ENCODE measurements at regions of chr7 and their contacts with region 1.

Region 1: GRCh38 chr7:50739744-50740435 is 42.8 kb downstream of the GRB10 start:
- DNase-seq: peak; percentile 38 to 93 (median 91)
- ATAC-seq: peak; percentile 99
- H3K4me3 ChIP-seq: peak overlapping the region; percentile 40
- H3K4me3 Mint-ChIP-seq: peak overlapping the region; percentile 68 to 87 (median 78)
- H3K27ac ChIP-seq: peak overlapping the region; percentile 80
- H3K27ac Mint-ChIP-seq: peak overlapping the region; percentile 82 to 97 (median 96)
- H3K4me1 ChIP-seq: peaks cover 15 to 23% of the 10 kb centered on the region in 2 donors
- H3K4me1 Mint-ChIP-seq: peaks cover 12 to 46% (median 34%) of the 10 kb centered on the region in 7 donors
- H3K27me3 ChIP-seq: no peaks in the 10 kb centered on the region
- H3K27me3 Mint-ChIP-seq: peaks cover 0 to 2% (median 0%) of the 10 kb centered on the region in 5 donors

Region 2: DNA sequence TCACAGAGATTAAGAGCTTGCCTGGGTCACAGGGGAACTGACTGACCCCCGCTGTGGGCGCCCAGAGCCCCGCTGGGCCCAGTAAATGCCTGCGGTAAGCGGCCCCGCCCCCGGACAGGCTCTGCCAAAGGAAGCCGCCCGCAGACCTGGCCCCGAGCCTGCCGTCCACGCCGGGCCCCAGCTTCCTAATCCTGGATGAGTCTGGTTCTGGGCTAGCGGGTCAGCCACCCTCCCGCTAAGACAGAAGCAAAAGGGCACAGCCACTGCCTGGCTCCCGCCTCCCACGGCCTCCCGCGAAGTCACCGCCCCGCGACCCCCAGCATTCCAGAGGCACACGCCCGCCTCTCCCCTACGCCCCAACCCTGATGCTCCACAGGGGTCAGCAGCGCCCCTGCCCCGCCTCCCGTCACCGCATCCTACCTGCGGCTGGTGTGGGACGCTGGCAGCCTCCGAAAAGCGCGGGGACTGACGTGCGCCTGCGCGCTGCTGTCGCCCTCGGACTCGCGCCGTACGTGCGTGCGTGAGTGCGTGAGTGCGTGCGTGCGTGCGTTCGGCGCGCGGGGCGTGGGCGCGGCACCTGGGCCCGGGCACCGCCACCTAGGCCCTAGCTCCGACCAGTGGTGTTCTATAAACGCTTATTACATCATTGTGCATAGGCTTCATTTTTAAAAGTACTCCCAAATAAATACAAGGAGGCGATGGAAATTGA is 289.9 kb before region 1 on chr7 and contains the start of gene FIGNL1:
- CTCF ChIA-PET with region 1: no interaction called
- POLR2A ChIA-PET with region 1: interaction called, 4 read pairs
- intact Hi-C with region 1: loop called (anchors 2 to 5 kb)
- DNase-seq: peak; percentile 61 to 87 (median 84)
- ATAC-seq: peak; percentile 98
- H3K4me3 ChIP-seq: peak within 1 kb of the TSS; percentile 63
- H3K4me3 Mint-ChIP-seq: peak within 1 kb of the TSS; percentile 91 to 96 (median 94)
- H3K27ac ChIP-seq: peak within 1 kb of the TSS; percentile 94
- H3K27ac Mint-ChIP-seq: peak within 1 kb of the TSS; percentile 92 to 99 (median 96)
- H3K4me1 ChIP-seq: peaks cover 13 to 14% of the 10 kb centered on the region in 2 donors
- H3K4me1 Mint-ChIP-seq: peaks cover 14 to 43% (median 29%) of the 10 kb centered on the region in 7 donors
- H3K27me3 ChIP-seq: no peaks in the 10 kb centered on the region
- H3K27me3 Mint-ChIP-seq: peaks cover 0 to 11% (median 0%) of the 10 kb centered on the region in 5 donors
- total RNA-seq, gene FIGNL1: 7.7 to 30.2 (median 14.3) TPM

Region 3: DNA sequence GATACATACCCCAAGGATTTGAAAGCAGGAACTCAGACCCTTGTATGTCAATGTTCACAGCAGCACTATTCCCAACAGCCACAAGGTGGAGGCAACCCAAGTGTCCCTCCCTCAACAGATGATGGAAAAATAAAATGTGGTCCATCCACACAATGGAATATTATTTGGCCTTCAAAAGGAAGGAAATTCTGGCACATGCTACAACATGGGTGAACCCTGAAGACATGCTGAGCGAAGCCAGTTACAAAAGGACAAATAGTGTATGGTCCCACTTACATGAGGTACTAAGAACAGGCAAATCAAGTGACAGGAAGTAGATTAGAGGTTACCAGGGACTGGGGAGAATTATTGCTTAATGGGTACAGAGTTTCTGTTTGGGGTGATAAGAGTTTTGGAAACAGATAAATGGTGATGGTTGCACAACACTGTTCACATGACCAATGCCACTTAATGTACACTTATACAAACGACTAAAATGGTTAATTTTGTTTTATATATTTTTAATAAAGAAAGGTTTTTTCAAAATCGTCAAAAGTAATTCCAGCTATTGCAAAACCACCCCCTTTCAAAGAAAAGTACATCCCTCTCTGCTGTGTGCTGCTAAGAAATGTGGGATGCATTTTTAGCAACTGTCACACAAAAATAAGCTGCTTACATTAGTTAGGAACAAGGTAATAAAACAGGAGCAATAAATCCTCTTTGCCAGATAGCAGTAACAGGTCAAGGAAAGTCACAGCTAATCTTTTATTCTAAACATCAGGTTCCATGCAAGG is 42.9 kb before region 1 on chr7:
- CTCF ChIA-PET with region 1: no interaction called
- POLR2A ChIA-PET with region 1: no interaction called
- intact Hi-C with region 1: loop called (anchors 1 to 5 kb)
- DNase-seq: peak in 5 of 9 donors; percentile 27 to 43 (median 38)
- ATAC-seq: peak; percentile 63
- H3K4me3 ChIP-seq: no peak overlapping the region
- H3K4me3 Mint-ChIP-seq: peak overlapping the region in 1 of 10 donors; percentile 3
- H3K27ac ChIP-seq: no peak overlapping the region
- H3K27ac Mint-ChIP-seq: peak overlapping the region in 2 of 9 donors; percentile 16 to 19
- H3K4me1 ChIP-seq: no peaks in the 10 kb centered on the region
- H3K4me1 Mint-ChIP-seq: peaks cover 0 to 9% (median 5%) of the 10 kb centered on the region in 7 donors
- H3K27me3 ChIP-seq: no peaks in the 10 kb centered on the region
- H3K27me3 Mint-ChIP-seq: peaks cover 0 to 3% (median 0%) of the 10 kb centered on the region in 5 donors

Region 4: GRCh38 chr7:50724526-50725520 is 15.1 kb before region 1 on chr7:
- CTCF ChIA-PET with region 1: interaction called, 4 read pairs
- POLR2A ChIA-PET with region 1: interaction called, 6 read pairs
- intact Hi-C with region 1: loop called in 1 of 2 experiments (anchors 1 kb)
- DNase-seq: peak in 3 of 9 donors; percentile 7 to 25 (median 10)
- ATAC-seq: peak; percentile 51
- H3K4me3 ChIP-seq: no peak overlapping the region
- H3K4me3 Mint-ChIP-seq: peak overlapping the region in 6 of 10 donors; percentile 5 to 67 (median 38)
- H3K27ac ChIP-seq: no peak overlapping the region
- H3K27ac Mint-ChIP-seq: peak overlapping the region in 4 of 9 donors; percentile 11 to 72 (median 70)
- H3K4me1 ChIP-seq: peaks cover 0 to 3% of the 10 kb centered on the region in 2 donors
- H3K4me1 Mint-ChIP-seq: peaks cover 0 to 22% (median 13%) of the 10 kb centered on the region in 7 donors
- H3K27me3 ChIP-seq: no peaks in the 10 kb centered on the region
- H3K27me3 Mint-ChIP-seq: peaks cover 0 to 3% (median 0%) of the 10 kb centered on the region in 5 donors

Region 5: GRCh38 chr7:50768485-50769484 is 28.9 kb after region 1 on chr7:
- CTCF ChIA-PET with region 1: no interaction called
- POLR2A ChIA-PET with region 1: no interaction called
- intact Hi-C with region 1: no loop called
- DNase-seq: no peak
- ATAC-seq: no peak
- H3K4me3 ChIP-seq: no peak overlapping the region
- H3K4me3 Mint-ChIP-seq: no peak overlapping the region
- H3K27ac ChIP-seq: no peak overlapping the region
- H3K27ac Mint-ChIP-seq: peak overlapping the region in 1 of 9 donors; percentile 2
- H3K4me1 ChIP-seq: no peaks in the 10 kb centered on the region
- H3K4me1 Mint-ChIP-seq: peaks cover 0 to 19% (median 4%) of the 10 kb centered on the region in 7 donors
- H3K27me3 ChIP-seq: no peaks in the 10 kb centered on the region
- H3K27me3 Mint-ChIP-seq: no peaks in the 10 kb centered on the region

Region 6: DNA sequence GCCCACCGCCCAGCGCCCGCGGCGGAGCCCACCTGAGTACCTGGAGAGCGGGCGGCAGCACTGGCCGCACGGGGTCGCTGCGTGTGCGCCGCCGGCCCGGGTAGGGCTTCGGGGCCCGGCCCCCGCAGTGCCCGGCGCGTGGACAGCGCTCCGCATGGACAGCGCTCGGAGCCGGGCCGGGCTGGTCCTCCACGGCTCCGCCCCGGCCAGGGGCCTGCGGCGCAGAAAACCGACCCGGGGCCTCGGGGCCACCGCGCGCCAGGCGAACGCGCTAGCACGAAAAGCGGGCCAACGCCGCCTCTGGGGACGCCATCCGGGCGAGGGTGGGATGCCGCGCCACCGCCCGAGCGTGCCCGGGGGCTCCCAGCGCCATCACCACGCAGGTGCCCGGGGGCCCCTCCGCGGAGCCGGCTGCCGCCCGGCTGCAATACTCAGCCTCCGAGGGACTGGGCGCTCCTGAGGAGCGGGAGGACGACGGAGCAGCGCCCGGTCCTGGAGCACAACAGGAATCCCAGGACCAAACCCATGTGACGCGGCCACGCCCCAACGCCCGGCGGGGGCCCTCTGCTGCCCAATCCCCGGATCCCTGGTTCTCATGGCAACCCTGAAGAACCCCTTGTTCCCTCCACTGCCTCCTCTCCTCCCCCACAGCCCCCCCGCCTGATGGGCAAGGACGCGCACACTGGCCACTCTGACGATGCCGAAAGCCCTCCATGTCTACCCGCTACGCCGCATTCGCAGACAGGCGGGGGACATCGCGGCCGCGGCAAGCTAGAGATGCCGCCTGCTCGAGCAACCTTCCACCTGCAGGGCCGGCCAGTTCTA is 42.7 kb after region 1 on chr7 and contains the start of gene GRB10:
- CTCF ChIA-PET with region 1: no interaction called
- POLR2A ChIA-PET with region 1: no interaction called
- intact Hi-C with region 1: loop called (anchors 1 to 2 kb)
- DNase-seq: peak in 3 of 9 donors; percentile 13 to 18 (median 16)
- ATAC-seq: peak; percentile 61
- H3K4me3 ChIP-seq: peak within 1 kb of the TSS; percentile 48
- H3K4me3 Mint-ChIP-seq: peak within 1 kb of the TSS; percentile 65 to 89 (median 84)
- H3K27ac ChIP-seq: no peak within 1 kb of the TSS
- H3K27ac Mint-ChIP-seq: peak within 1 kb of the TSS in 8 of 9 donors; percentile 67 to 95 (median 82)
- H3K4me1 ChIP-seq: peaks cover 0 to 9% of the 10 kb centered on the region in 2 donors
- H3K4me1 Mint-ChIP-seq: peaks cover 6 to 41% (median 26%) of the 10 kb centered on the region in 7 donors
- H3K27me3 ChIP-seq: no peaks in the 10 kb centered on the region
- H3K27me3 Mint-ChIP-seq: peaks cover 15 to 51% (median 24%) of the 10 kb centered on the region in 5 donors
- total RNA-seq, gene GRB10: 3.4 to 10.6 (median 7.2) TPM

Region 7: GRCh38 chr7:50793115-50793946 is 53.4 kb after region 1 on chr7:
- CTCF ChIA-PET with region 1: no interaction called
- POLR2A ChIA-PET with region 1: no interaction called
- intact Hi-C with region 1: loop called (anchors 1 to 2 kb)
- DNase-seq: peak in 8 of 9 donors; percentile 17 to 43 (median 34)
- ATAC-seq: peak; percentile 68
- H3K4me3 ChIP-seq: no peak overlapping the region
- H3K4me3 Mint-ChIP-seq: peak overlapping the region; percentile 52 to 89 (median 77)
- H3K27ac ChIP-seq: no peak overlapping the region
- H3K27ac Mint-ChIP-seq: peak overlapping the region in 4 of 9 donors; percentile 6 to 87 (median 48)
- H3K4me1 ChIP-seq: peaks cover 0 to 3% of the 10 kb centered on the region in 2 donors
- H3K4me1 Mint-ChIP-seq: peaks cover 0 to 37% (median 16%) of the 10 kb centered on the region in 7 donors
- H3K27me3 ChIP-seq: peaks cover 0 to 4% of the 10 kb centered on the region in 2 donors
- H3K27me3 Mint-ChIP-seq: peaks cover 23 to 80% (median 34%) of the 10 kb centered on the region in 5 donors